IMR-90 (cell line): ENCODE measurements at regions of chr19 and their contacts with region 1.

Region 1: GRCh38 chr19:15337202-15337601 is 4.9 kb upstream of the BRD4 start:
- DNase-seq: peak; percentile 80
- ATAC-seq: peak; percentile 33
- H3K4me3 ChIP-seq: no peak overlapping the region
- H3K27ac ChIP-seq: no peak overlapping the region
- H3K4me1 ChIP-seq: peaks cover 6% of the 10 kb centered on the region
- H3K27me3 ChIP-seq: no peaks in the 10 kb centered on the region
- CTCF ChIP-seq: no peak
- POLR2A ChIP-seq: no peak
- RAD21 ChIP-seq: no peak

Region 2: DNA sequence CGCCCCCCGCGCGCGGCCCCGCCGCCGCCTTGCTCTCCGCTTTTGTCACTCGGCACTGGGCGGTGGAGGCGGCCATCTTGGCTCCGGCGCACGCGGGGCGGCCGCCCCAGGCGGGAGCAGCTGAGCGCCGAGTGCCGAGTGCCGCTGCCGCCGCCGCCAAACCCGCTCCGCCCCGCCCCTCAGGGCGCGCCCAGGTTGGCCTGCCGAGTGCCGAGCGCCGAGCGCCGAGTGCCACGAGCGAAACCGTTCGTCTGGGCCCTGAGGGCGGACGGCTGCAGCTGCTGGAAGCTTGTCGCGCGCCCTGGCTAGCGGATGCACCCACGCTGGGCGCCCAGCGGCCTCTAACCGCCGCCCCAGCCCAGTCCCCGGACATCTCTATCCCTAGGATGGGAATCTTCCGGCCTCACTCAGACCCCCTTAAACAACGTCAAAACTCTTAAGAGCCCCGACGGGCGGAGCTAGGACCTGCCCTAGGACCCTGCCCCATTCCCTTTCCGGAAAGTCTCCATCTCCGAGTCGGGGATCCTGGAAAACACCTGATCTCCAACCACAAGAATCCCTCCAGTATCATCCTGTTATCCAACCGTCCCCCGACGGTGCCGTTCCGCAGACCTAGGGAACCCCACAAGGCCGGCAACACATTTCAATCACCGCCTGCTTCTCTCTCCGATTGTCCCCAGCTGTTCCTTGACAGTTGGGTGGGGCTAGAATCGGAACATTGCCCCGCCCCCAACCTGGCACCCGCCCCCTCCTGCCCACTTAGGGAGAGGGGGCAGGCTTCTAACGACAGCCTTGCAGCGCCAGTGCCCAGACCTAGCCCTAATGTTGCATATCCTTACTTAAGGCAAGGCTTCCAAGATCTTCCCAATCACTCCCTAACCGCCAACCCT is 95.7 kb after region 1 on chr19:
- CTCF ChIA-PET with region 1: no interaction called
- POLR2A ChIA-PET with region 1: no interaction called
- dilution Hi-C with region 1: no loop called
- in situ Hi-C with region 1: no loop called
- intact Hi-C with region 1: no loop called
- DNase-seq: peak; percentile 87
- ATAC-seq: peak; percentile 94
- H3K4me3 ChIP-seq: peak overlapping the region; percentile 51
- H3K27ac ChIP-seq: peak overlapping the region; percentile 48
- H3K4me1 ChIP-seq: peaks cover 30% of the 10 kb centered on the region
- H3K27me3 ChIP-seq: no peaks in the 10 kb centered on the region
- CTCF ChIP-seq: no peak
- POLR2A ChIP-seq: peak; percentile 61; the same call in 1 of the 2 replicates
- RAD21 ChIP-seq: no peak; the same call in 1 of the 2 replicates

Region 3: DNA sequence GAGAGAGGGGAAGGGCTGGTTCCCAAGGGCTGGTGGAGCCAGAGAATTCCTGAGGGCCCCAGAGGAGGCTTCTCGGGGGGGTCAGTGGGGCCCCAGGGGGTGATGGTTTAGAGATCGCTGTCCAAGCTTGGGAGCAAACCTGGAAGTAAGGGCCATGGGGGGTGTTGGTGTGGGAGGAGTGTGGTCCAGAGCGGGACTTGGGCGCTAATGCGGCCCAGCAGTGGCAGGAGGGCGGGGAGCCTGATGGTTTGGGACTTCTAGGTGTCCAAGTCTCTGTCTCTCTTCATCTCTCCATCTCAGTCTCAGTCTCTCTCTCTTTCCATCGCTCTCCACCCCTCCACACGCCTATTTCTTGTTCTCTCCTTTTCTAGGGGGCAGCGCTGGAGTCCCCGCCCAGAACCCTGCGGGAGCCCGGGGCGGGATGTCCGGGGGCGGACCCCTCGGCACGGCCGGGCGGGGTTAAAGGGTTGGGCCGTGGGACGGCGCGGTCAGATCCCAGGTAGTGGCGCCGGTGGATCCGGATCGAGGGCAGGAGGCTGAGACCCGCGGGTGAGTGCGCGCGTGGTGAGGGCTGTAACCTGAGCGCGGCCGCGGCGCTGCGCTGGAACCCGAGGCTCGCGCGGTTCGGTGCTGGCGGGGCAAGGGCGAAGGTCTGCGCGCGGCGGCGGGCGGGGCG is 171.0 kb after region 1 on chr19 and contains the start of gene CYP4F22:
- CTCF ChIA-PET with region 1: no interaction called
- POLR2A ChIA-PET with region 1: interaction called, 11 read pairs
- dilution Hi-C with region 1: no loop called
- in situ Hi-C with region 1: no loop called
- intact Hi-C with region 1: no loop called
- DNase-seq: no peak
- ATAC-seq: no peak
- H3K4me3 ChIP-seq: no peak within 1 kb of the TSS
- H3K27ac ChIP-seq: no peak within 1 kb of the TSS
- H3K4me1 ChIP-seq: no peaks in the 10 kb centered on the region
- H3K27me3 ChIP-seq: peaks cover 11% of the 10 kb centered on the region; the same call in 1 of the 2 replicates
- CTCF ChIP-seq: no peak
- POLR2A ChIP-seq: no peak
- RAD21 ChIP-seq: no peak
- total RNA-seq, gene CYP4F22: not detected in 2 replicates

Region 4: DNA sequence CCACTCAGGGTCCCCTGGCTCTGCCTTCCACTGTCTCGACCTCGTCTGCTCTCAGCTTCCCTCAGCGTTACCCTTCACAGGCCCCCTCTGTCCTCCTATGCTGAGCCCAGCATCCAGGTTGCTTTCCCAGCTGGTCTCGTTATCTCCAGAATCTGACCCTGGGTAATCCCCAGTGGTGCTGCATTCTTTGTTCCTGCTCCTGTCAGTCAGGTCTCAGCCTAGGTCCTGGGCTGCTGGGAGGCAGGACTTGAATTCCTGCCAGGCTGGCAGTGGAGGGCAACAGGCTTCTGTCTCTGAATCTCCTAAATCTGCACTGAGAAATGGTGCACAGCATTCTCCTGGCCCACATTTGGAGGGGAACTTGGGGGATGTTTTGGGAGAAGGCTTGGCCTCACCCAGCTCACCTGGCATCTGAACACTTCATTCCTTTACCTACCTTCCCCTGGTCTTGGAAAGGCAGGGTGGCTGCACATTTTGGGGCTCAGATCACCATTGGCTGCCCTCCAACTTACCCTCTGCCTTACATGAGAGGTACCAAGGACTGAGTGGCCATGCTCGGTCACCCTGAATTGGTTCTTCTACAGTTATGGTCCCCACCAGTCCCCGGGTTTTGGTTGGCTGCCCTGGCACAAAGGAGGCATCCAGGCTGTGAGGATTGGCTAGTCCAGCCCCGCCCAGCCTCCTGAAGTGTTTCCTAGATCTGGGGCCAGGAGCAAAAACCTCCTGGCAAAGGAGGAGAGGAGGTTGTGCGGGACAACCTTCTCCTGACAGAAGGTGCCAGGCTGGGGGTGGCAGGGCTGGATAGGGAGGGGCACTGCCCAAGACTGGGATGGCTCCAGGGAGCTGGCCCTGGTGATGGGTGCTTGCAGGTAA is 277.5 kb after region 1 on chr19 and contains the start of gene CYP4F8:
- CTCF ChIA-PET with region 1: no interaction called
- POLR2A ChIA-PET with region 1: no interaction called
- dilution Hi-C with region 1: no loop called
- in situ Hi-C with region 1: no loop called
- intact Hi-C with region 1: no loop called
- DNase-seq: no peak
- ATAC-seq: no peak
- H3K4me3 ChIP-seq: no peak within 1 kb of the TSS
- H3K27ac ChIP-seq: no peak within 1 kb of the TSS
- H3K4me1 ChIP-seq: no peaks in the 10 kb centered on the region
- H3K27me3 ChIP-seq: no peaks in the 10 kb centered on the region
- CTCF ChIP-seq: no peak
- POLR2A ChIP-seq: no peak
- RAD21 ChIP-seq: no peak
- total RNA-seq, gene CYP4F8: not detected in 2 replicates